ENCODE measurements at regions of chr1 and their contacts with region 1.

Region 1: DNA sequence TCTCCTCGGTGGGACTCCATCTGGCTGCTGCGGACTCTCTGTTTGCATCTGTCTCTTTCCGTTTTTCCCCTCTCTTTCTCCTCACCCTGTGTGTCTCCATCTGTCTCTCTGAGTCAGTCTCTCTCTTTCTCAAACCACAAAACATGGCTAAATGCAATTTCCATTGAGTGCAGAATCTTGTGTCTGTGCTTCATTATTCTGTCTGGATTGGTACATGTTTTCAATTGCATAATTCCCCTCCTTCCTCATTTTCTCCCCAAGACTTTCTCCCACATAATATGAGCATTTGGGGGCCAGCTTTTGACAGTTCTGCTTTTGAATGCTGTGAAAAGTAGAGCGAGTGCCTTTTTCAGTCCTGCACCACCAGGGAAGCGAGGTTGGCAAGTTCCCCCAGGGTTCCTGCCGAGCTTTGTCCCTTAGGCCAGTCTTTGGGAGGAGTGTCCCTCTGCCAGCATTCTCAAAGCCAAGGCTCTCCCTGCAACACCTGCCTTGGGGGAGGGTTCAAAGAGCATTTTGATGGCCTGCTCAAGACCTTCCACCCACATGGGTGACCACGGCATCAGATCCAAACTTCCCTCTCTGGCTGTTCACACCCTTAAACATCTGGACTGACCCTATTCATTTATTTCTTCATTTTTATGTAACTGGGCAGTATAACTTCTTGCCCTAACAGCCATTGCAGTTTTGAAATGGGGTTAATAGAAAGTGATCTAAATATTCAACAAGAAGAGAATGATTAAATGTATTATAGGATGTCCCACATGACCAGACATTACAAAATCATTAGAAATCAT is 32.8 kb upstream of the SCMH1 start:
- DNase-seq: no peak
- ATAC-seq: peak in 3 of 4 donors; percentile 16 to 71 (median 44)
- H3K4me3 ChIP-seq: no peak overlapping the region
- H3K27ac ChIP-seq: peak overlapping the region in 1 of 12 donors; percentile 46
- H3K4me1 ChIP-seq: peaks cover 0 to 37% (median 0%) of the 10 kb centered on the region in 12 donors
- H3K27me3 ChIP-seq: peaks cover 0 to 7% (median 0%) of the 10 kb centered on the region in 9 donors
- CTCF ChIP-seq: no peak
- POLR2A ChIP-seq: no peak

Region 2: DNA sequence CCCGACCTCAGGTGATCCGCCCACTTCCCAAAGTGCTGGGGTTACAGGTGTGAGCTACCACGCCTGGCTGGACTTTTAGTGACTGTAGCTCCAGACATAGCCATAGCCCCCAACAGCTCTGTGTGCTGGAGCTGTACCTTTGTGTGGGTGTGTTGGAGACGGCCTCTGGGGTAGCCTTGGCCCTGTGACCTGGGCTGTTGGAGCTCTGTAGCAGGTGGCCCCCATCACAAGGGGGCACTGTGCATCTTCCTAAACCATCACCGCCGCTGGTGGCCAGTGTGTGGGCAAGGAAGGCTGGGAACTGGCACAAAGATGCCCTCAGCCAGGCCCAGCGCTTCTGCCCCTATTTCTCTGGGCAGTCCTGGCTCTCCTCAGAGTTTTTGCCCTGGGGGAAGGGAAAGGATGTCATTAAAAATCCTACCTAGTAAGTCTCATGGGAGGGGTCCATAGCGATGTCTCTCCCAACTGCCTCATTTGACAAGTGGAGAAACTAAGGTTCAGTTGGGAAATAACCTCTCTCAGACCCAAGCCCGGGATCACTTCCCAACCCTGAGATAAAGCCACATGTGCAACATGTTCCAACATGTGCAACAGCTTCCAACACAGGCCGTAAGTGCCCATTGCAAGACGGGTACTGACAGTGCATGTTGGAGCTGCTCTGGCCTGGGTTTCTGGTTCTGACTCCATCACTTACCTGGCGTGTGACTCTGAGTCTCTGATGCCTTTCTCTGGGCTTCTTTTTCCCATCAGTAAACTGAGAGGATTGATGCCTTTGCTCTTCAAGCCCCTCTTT is 48.1 kb after region 1 on chr1:
- intact Hi-C with region 1: loop called in 1 of 10 experiments (anchors 5 kb)
- DNase-seq: peak in 3 of 5 donors; percentile 41 to 68 (median 67)
- ATAC-seq: peak; percentile 64 to 75 (median 74)
- H3K4me3 ChIP-seq: no peak overlapping the region
- H3K27ac ChIP-seq: no peak overlapping the region
- H3K4me1 ChIP-seq: peaks cover 0 to 19% (median 13%) of the 10 kb centered on the region in 12 donors
- H3K27me3 ChIP-seq: no peaks in the 10 kb centered on the region
- CTCF ChIP-seq: peak; percentile 38 to 63 (median 50)
- POLR2A ChIP-seq: no peak

Measured in heart left ventricle (tissue), 16 donors.